Sigmoid colon (tissue), 7 donors: ENCODE measurements at regions of chr7 and their contacts with region 1.

Region 1: DNA sequence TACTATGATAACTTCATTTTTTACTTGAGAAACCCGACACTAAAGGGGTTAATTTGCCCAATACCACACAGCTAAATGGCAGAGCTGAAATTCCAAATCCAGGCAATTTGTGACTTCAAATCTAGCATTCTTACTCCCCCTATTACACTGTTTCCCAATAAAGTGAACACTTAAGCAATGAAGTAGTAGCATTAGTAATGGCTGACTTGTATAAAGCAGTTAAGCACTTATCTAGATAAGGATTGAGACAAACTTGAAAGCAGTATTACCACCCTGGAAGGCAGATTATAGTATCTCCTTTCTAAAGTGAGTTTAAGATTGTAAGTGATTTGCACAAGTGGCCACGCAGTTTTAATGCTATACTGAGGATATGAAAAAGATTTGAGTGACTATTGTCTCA is 39.3 kb downstream of the WASL start:
- DNase-seq: no peak
- H3K4me3 ChIP-seq: no peak overlapping the region
- H3K27ac ChIP-seq: no peak overlapping the region
- H3K4me1 ChIP-seq: peaks cover 0 to 37% (median 18%) of the 10 kb centered on the region in 4 donors
- H3K27me3 ChIP-seq: no peaks in the 10 kb centered on the region
- CTCF ChIP-seq: no peak
- EP300 ChIP-seq: no peak
- POLR2A ChIP-seq: no peak

Region 2: GRCh38 chr7:123494193-123494796 is 215.2 kb before region 1 on chr7:
- intact Hi-C with region 1: loop called (anchors 10 kb)
- DNase-seq: no peak
- H3K4me3 ChIP-seq: no peak overlapping the region
- H3K27ac ChIP-seq: no peak overlapping the region
- H3K4me1 ChIP-seq: no peaks in the 10 kb centered on the region
- H3K27me3 ChIP-seq: no peaks in the 10 kb centered on the region
- CTCF ChIP-seq: peak in 3 of 4 experiments; percentile 26 to 64 (median 46)
- EP300 ChIP-seq: no peak
- POLR2A ChIP-seq: no peak

Region 3: DNA sequence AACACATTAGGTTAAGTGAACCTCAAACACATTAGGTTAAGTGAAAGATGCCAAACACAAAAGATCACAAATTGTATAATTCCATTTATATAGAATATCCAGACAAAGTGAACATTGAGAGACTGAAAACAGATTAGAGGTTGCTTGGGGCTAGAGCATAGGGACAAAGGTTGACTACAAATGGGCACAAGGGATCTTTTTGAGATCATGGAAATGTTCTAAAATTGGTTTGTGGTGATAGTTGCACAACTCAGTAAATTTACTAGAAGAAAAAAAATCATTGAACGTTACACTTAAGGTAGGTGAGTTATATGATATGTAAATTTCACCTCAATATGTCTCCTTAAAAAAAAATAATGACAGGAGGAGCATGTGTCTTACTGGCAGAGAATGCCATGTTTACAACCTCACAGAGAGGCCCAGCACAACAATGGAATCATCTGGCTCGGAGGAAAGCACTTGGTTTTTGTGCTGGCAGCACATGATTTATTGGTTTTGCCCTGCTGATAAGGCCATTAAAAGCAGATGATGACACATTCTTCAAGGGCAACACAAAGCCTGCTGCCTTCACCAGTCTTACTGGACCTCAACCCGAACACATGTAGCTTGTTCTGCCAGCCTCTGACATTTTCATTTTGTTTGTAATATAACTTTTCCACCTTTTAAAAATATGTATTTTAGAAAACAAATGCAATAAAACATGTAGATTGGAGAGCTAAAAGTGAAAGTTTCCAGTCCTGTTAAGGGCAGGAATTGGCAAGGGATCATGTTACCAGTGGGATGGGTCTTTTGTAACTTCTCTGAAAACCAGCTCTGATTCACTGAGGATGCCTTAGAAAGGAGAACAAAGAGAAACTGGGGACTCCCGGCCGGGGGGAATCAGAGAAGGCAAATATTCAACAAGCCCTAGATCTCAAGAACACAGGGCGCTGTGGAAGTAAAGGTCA is 65.8 kb before region 1 on chr7:
- intact Hi-C with region 1: no loop called
- DNase-seq: no peak
- H3K4me3 ChIP-seq: peak overlapping the region in 3 of 4 donors; percentile 5 to 13 (median 9)
- H3K27ac ChIP-seq: peak overlapping the region in 3 of 4 donors; percentile 16 to 61 (median 22)
- H3K4me1 ChIP-seq: peaks cover 0 to 17% (median 12%) of the 10 kb centered on the region in 4 donors
- H3K27me3 ChIP-seq: no peaks in the 10 kb centered on the region
- CTCF ChIP-seq: no peak
- EP300 ChIP-seq: no peak
- POLR2A ChIP-seq: no peak

Region 4: GRCh38 chr7:123748734-123749536 is 39.4 kb after region 1 on chr7 and contains the start of gene WASL:
- intact Hi-C with region 1: loop called (anchors 5 kb)
- DNase-seq: peak; percentile 96
- H3K4me3 ChIP-seq: peak within 1 kb of the TSS; percentile 66 to 94 (median 81)
- H3K27ac ChIP-seq: peak within 1 kb of the TSS; percentile 90 to 99 (median 98)
- H3K4me1 ChIP-seq: peaks cover 2 to 61% (median 51%) of the 10 kb centered on the region in 4 donors
- H3K27me3 ChIP-seq: no peaks in the 10 kb centered on the region
- CTCF ChIP-seq: no peak
- EP300 ChIP-seq: peak in 2 of 4 donors; percentile 3 to 16
- POLR2A ChIP-seq: peak; percentile 89 to 92
- total RNA-seq, gene WASL: 32.4 to 45.3 (median 39.0) TPM